AG04450 (cell line): ENCODE measurements at regions of chr2 and their contacts with region 1.

Region 1: GRCh38 chr2:71068218-71069035 is at the start of gene NAGK:
- DNase-seq: peak; percentile 92
- H3K4me3 ChIP-seq: peak within 1 kb of the TSS; percentile 96
- H3K27ac ChIP-seq: peak within 1 kb of the TSS; percentile 97
- H3K27me3 ChIP-seq: no peaks in the 10 kb centered on the region
- CTCF ChIP-seq: no peak
- polyA plus RNA-seq, gene NAGK: 96.1 and 103 TPM in 2 replicates

Region 2: DNA sequence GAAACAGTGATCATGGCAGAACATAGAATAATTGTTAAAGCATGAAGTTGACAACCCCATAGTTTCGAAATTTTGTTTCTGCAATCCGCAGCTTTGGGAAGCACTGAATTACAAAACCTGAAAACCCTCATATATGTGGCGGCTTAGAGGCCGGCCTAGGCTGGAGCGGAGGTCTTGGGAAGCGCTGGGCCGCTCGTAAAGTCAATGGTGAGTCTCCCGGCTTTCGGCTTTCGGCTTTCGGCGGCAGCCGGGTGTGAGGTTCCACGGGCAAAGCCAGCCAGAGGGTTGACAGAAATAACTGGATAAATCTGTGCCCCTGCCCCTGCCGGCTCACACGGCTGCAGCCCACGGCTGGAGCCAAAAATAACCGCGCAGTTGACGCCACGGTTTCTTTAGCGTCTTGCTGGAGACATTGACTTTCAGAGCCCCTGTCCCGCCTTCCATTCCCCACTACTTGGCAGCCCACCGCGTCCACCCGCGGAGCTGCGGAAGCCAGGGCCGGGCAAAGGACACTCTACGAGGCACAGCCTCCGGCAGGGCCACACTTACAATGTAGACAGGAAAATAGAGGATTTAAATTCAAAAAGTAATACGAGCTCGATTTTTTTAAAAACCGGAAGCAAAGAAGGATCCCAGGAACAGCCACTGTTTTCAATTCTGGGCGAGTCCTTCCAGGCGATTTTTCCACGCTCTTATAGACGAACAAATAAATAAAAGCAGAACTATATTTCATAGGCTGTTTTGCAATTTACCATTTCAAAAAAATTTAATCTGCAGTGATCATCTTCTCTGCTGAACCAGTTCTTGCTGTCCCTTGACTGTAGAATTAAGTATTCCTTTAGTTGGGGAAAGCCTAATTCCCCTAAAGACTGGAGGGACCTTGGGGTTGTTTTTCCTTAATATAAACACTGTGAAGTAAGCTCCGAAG is 161.0 kb before region 1 on chr2:
- CTCF ChIA-PET with region 1: no interaction called
- POLR2A ChIA-PET with region 1: no interaction called
- DNase-seq: no peak
- H3K4me3 ChIP-seq: peak overlapping the region; percentile 51
- H3K27ac ChIP-seq: no peak overlapping the region
- H3K27me3 ChIP-seq: no peaks in the 10 kb centered on the region
- CTCF ChIP-seq: no peak

Region 3: DNA sequence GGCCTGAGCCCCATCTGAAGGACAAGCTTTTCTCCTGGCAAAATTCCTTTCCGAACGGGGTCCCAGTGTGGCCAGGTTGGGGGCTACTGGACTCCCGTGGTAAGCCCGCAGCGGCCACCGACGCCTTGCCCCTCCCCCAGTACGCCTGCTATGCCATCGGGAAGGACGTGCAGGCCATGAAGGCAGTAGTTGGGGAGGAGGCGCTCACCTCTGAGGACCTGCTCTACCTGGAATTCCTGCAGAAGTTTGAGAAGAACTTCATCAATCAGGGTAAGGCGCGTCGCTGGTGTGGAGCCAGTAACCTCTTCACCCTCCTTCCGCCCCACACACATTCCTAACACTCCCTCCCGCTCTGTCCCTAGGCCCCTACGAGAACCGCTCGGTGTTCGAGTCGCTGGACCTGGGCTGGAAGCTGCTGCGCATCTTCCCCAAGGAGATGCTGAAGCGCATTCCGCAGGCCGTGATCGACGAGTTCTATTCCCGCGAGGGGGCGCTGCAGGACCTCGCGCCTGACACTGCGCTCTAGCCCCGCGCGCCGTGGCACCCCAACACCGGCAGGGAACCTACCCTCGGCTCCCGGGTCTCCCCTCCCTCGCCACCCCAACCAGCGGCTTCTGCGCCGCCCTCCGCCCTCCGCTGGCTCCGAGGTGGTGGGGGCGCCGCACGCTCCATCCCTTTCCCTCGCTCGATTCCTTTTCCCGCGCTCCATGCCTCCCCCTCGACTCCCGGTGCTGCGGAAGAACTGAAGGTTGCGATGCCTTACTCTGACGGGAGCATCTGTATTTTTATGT is 103.6 kb before region 1 on chr2:
- CTCF ChIA-PET with region 1: interaction called, 10 read pairs
- POLR2A ChIA-PET with region 1: no interaction called
- DNase-seq: peak; percentile 29
- H3K4me3 ChIP-seq: peak overlapping the region; percentile 60
- H3K27ac ChIP-seq: no peak overlapping the region
- H3K27me3 ChIP-seq: peaks cover 9% of the 10 kb centered on the region
- CTCF ChIP-seq: peak; percentile 78

Region 4: DNA sequence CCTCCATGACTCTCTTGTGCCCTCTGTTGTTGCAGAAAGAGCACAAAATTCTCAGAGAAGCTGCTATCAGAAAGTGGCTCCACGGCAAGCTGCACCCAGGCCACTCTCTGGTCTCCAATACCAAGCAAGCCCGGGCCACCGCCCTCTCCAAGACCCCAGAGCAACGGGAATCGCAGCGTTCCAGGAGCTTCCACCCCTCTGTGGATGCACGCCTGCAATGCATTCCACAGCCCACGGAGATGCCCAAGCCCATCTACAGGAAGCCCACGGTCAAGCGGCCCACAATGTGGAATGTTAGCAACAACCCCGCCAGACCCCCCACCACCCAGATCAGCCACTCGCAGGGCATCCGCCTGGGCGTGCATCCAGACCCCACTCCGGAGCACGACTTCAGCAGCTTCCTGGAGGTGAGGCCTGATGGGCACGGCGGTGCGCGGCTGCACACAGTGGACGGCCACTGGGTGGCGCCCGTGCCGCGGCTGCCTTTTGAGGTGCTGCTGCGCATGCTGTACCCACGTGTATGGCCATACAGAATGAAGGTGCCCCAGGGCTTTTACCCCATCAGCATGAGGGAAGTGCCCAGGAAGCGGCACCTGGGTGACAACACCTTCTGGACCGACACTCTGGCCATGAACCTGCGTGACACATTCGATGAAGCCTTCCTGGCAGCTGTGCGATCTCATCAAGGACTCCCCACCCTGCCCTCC is 83.7 kb before region 1 on chr2:
- CTCF ChIA-PET with region 1: interaction called, 19 read pairs
- POLR2A ChIA-PET with region 1: no interaction called
- DNase-seq: no peak
- H3K4me3 ChIP-seq: no peak overlapping the region
- H3K27ac ChIP-seq: no peak overlapping the region
- H3K27me3 ChIP-seq: no peaks in the 10 kb centered on the region
- CTCF ChIP-seq: peak; percentile 68

Region 5: GRCh38 chr2:71078624-71079023 is 10.2 kb after region 1 on chr2:
- CTCF ChIA-PET with region 1: no interaction called
- POLR2A ChIA-PET with region 1: interaction called, 11 read pairs
- DNase-seq: no peak
- H3K4me3 ChIP-seq: no peak overlapping the region
- H3K27ac ChIP-seq: no peak overlapping the region
- H3K27me3 ChIP-seq: no peaks in the 10 kb centered on the region
- CTCF ChIP-seq: no peak

Region 6: GRCh38 chr2:71130113-71130904 is 61.9 kb after region 1 on chr2 and contains the starts of genes MCEE and MPHOSPH10:
- CTCF ChIA-PET with region 1: interaction called, 4 read pairs
- POLR2A ChIA-PET with region 1: interaction called, 33 read pairs
- DNase-seq: peak; percentile 77
- H3K4me3 ChIP-seq: peak within 1 kb of the TSS; percentile 98
- H3K27ac ChIP-seq: peak within 1 kb of the TSS; percentile 97
- H3K27me3 ChIP-seq: no peaks in the 10 kb centered on the region
- CTCF ChIP-seq: no peak
- polyA plus RNA-seq, gene MCEE: 14.6 and 18.1 TPM in 2 replicates
- polyA plus RNA-seq, gene MPHOSPH10: 14.1 and 23.3 TPM in 2 replicates